ENCODE measurements at regions of chr15 and their contacts with region 1.

Region 1: GRCh38 chr15:44738340-44738984 is 2.1 kb downstream of the TRIM69 start:
- DNase-seq: no peak
- ATAC-seq: no peak
- H3K4me3 ChIP-seq: no peak overlapping the region
- H3K27ac ChIP-seq: no peak overlapping the region
- H3K4me1 ChIP-seq: peaks cover 22% of the 10 kb centered on the region
- H3K27me3 ChIP-seq: no peaks in the 10 kb centered on the region
- CTCF ChIP-seq: peak; percentile 55 to 80 (median 70); a peak in 5 of 6 replicates
- EP300 ChIP-seq: no peak
- POLR2A ChIP-seq: no peak
- RAD21 ChIP-seq: peak; percentile 87

Region 2: GRCh38 chr15:44519537-44519936 is 218.9 kb before region 1 on chr15:
- CTCF ChIA-PET with region 1: no interaction called
- POLR2A ChIA-PET with region 1: no interaction called
- RAD21 ChIA-PET with region 1: no interaction called
- SMC1A ChIA-PET with region 1: no interaction called
- in situ Hi-C with region 1: no loop called
- intact Hi-C with region 1: no loop called
- DNase-seq: no peak
- ATAC-seq: no peak
- H3K4me3 ChIP-seq: no peak overlapping the region
- H3K27ac ChIP-seq: no peak overlapping the region
- H3K4me1 ChIP-seq: no peaks in the 10 kb centered on the region
- H3K27me3 ChIP-seq: no peaks in the 10 kb centered on the region
- CTCF ChIP-seq: no peak
- EP300 ChIP-seq: no peak
- POLR2A ChIP-seq: no peak
- RAD21 ChIP-seq: no peak

Region 3: GRCh38 chr15:44545913-44546802 is 192.3 kb before region 1 on chr15:
- CTCF ChIA-PET with region 1: interaction called, 26 read pairs
- POLR2A ChIA-PET with region 1: interaction called, 6 read pairs
- RAD21 ChIA-PET with region 1: interaction called, 11 read pairs
- SMC1A ChIA-PET with region 1: interaction called, 4 read pairs
- in situ Hi-C with region 1: no loop called
- intact Hi-C with region 1: no loop called
- DNase-seq: peak; percentile 41
- ATAC-seq: peak; percentile 89
- H3K4me3 ChIP-seq: peak overlapping the region; percentile 23; the same call in 1 of the 2 replicates
- H3K27ac ChIP-seq: peak overlapping the region; percentile 70
- H3K4me1 ChIP-seq: peaks cover 7% of the 10 kb centered on the region
- H3K27me3 ChIP-seq: no peaks in the 10 kb centered on the region
- CTCF ChIP-seq: peak; percentile 37 to 47 (median 42); a peak in 5 of 6 replicates
- EP300 ChIP-seq: no peak
- POLR2A ChIP-seq: no peak
- RAD21 ChIP-seq: no peak

Region 4: DNA sequence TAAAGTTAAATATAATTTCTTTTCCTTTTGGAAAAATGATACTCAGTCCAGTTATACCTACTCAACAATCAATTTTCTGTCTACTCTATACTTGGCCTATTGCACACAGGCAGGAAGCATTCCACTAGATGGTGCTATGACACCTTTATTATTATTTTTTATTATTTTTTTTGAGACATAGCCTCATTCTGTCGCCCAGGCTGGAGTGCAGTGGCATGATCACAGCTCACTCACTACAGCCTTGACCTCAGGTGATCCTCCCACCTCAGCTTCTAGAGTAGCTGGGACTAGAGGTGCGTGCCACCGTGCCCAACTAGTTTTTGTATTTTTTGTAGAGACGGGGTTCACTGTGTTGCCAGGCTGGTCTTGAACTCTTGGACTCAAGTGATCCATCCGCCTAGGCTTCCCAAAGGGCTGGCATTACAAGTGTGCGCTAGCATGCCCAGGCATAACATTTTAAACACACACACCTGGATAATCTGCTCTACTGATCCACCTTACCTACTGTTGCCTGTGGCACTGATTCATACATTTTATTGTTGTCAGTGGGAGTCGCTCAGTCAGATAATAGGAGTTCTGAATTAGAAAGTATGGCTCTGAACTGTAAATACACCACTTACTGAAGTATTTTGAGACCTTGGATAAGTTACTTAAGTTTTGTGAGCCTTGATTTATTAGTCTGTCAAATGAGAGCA is 145.3 kb before region 1 on chr15:
- CTCF ChIA-PET with region 1: interaction called, 175 read pairs
- POLR2A ChIA-PET with region 1: interaction called, 14 read pairs
- RAD21 ChIA-PET with region 1: interaction called, 109 read pairs
- SMC1A ChIA-PET with region 1: interaction called, 77 read pairs
- in situ Hi-C with region 1: loop called (anchors 5 kb)
- intact Hi-C with region 1: loop called (anchors 5 kb)
- DNase-seq: no peak
- ATAC-seq: peak; percentile 72
- H3K4me3 ChIP-seq: no peak overlapping the region
- H3K27ac ChIP-seq: no peak overlapping the region
- H3K4me1 ChIP-seq: peaks cover 7% of the 10 kb centered on the region; the same call in 1 of the 2 replicates
- H3K27me3 ChIP-seq: no peaks in the 10 kb centered on the region
- CTCF ChIP-seq: peak; percentile 42 to 54 (median 42); a peak in 5 of 6 replicates
- EP300 ChIP-seq: no peak
- POLR2A ChIP-seq: no peak
- RAD21 ChIP-seq: peak; percentile 53

Region 5: DNA sequence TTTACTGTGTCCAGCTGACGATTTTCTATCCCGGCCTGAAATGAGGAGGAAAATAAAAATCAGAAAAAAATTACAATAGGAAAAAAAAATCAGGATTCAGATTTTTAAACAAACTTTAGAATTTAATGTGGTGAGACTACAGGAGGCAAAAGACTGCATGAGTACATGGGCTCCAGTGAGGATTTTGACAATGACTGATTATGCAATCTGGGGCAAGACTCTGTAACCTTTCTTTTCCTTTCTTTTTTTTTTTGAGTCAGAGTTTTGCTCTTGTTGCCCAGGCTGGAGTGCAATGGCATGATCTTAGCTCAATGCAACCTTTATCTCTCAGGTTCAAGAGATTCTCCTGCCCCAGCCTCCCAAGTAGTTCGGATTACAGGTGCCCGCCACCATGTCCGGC is 104.9 kb before region 1 on chr15:
- CTCF ChIA-PET with region 1: interaction called, 8 read pairs
- POLR2A ChIA-PET with region 1: no interaction called
- RAD21 ChIA-PET with region 1: interaction called, 4 read pairs
- SMC1A ChIA-PET with region 1: interaction called, 19 read pairs
- in situ Hi-C with region 1: no loop called
- intact Hi-C with region 1: no loop called
- DNase-seq: no peak
- ATAC-seq: peak; percentile 76
- H3K4me3 ChIP-seq: no peak overlapping the region
- H3K27ac ChIP-seq: peak overlapping the region; percentile 35; the same call in 1 of the 2 replicates
- H3K4me1 ChIP-seq: no peaks in the 10 kb centered on the region
- H3K27me3 ChIP-seq: no peaks in the 10 kb centered on the region
- CTCF ChIP-seq: no peak
- EP300 ChIP-seq: no peak
- POLR2A ChIP-seq: no peak
- RAD21 ChIP-seq: no peak

Region 6: GRCh38 chr15:44668921-44669320 is 69.5 kb before region 1 on chr15:
- CTCF ChIA-PET with region 1: interaction called, 454 read pairs
- POLR2A ChIA-PET with region 1: interaction called, 194 read pairs
- RAD21 ChIA-PET with region 1: interaction called, 680 read pairs
- SMC1A ChIA-PET with region 1: interaction called, 383 read pairs
- in situ Hi-C with region 1: no loop called
- intact Hi-C with region 1: no loop called
- DNase-seq: no peak
- ATAC-seq: no peak
- H3K4me3 ChIP-seq: no peak overlapping the region
- H3K27ac ChIP-seq: no peak overlapping the region
- H3K4me1 ChIP-seq: peaks cover 62% of the 10 kb centered on the region
- H3K27me3 ChIP-seq: no peaks in the 10 kb centered on the region
- CTCF ChIP-seq: no peak
- EP300 ChIP-seq: no peak
- POLR2A ChIP-seq: no peak
- RAD21 ChIP-seq: no peak

Region 7: GRCh38 chr15:44711356-44712107 is 26.9 kb before region 1 on chr15 and contains the start of gene B2M:
- CTCF ChIA-PET with region 1: interaction called, 278 read pairs
- POLR2A ChIA-PET with region 1: interaction called, 718 read pairs
- RAD21 ChIA-PET with region 1: interaction called, 653 read pairs
- SMC1A ChIA-PET with region 1: interaction called, 637 read pairs
- in situ Hi-C with region 1: no loop called
- intact Hi-C with region 1: no loop called
- DNase-seq: peak; percentile 94
- ATAC-seq: peak; percentile 74
- H3K4me3 ChIP-seq: peak within 1 kb of the TSS; percentile 99
- H3K27ac ChIP-seq: peak within 1 kb of the TSS; percentile 99
- H3K4me1 ChIP-seq: peaks cover 16% of the 10 kb centered on the region
- H3K27me3 ChIP-seq: no peaks in the 10 kb centered on the region
- CTCF ChIP-seq: no peak
- EP300 ChIP-seq: no peak; a peak in 1 of 4 replicates
- POLR2A ChIP-seq: peak; percentile 98
- RAD21 ChIP-seq: no peak
- polyA plus RNA-seq, gene B2M: 16,306 to 22,794 TPM

Region 8: DNA sequence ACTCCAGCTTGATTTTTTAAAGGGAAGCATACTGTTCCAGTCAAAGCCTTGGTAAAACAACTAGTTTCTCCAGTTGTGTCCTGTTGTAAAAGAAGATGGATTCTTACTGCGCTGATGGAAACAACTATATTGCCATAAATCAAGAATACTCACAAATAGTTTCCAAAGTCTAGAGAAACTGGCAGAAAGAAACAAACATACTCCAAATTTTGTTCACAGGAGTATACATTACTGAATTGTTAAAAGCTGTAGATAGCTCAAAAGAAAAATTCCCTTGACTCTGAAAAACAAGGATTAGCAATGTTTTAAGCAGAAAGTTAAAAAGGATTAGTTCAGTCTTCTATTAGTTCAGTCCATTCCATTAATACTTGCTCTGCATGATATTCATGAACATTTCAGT is 312.1 kb after region 1 on chr15:
- CTCF ChIA-PET with region 1: no interaction called
- POLR2A ChIA-PET with region 1: no interaction called
- RAD21 ChIA-PET with region 1: no interaction called
- SMC1A ChIA-PET with region 1: no interaction called
- in situ Hi-C with region 1: no loop called
- intact Hi-C with region 1: no loop called
- DNase-seq: no peak
- ATAC-seq: no peak
- H3K4me3 ChIP-seq: no peak overlapping the region
- H3K27ac ChIP-seq: no peak overlapping the region
- H3K4me1 ChIP-seq: peaks cover 10% of the 10 kb centered on the region
- H3K27me3 ChIP-seq: no peaks in the 10 kb centered on the region
- CTCF ChIP-seq: no peak
- EP300 ChIP-seq: no peak
- POLR2A ChIP-seq: no peak
- RAD21 ChIP-seq: no peak

Measured in GM12878 (cell line).